ENCODE measurements at regions of chr14 and their contacts with region 1.

Region 1: GRCh38 chr14:100383727-100384158 is 60.6 kb downstream of the SLC25A47 start:
- H3K4me3 ChIP-seq: no peak overlapping the region
- H3K27ac ChIP-seq: no peak overlapping the region
- H3K4me1 ChIP-seq: peaks cover 14% of the 10 kb centered on the region
- CTCF ChIP-seq: peak; percentile 89

Region 2: GRCh38 chr14:100408350-100409015 is 24.7 kb after region 1 on chr14:
- CTCF ChIA-PET with region 1: interaction called, 17 read pairs
- POLR2A ChIA-PET with region 1: interaction called, 5 read pairs
- H3K4me3 ChIP-seq: no peak overlapping the region
- H3K27ac ChIP-seq: no peak overlapping the region
- H3K4me1 ChIP-seq: 0 out of 2 replicates have a peak, but pooled peaks cover 5% of the 10 kb centered on the region
- CTCF ChIP-seq: no peak

Region 3: DNA sequence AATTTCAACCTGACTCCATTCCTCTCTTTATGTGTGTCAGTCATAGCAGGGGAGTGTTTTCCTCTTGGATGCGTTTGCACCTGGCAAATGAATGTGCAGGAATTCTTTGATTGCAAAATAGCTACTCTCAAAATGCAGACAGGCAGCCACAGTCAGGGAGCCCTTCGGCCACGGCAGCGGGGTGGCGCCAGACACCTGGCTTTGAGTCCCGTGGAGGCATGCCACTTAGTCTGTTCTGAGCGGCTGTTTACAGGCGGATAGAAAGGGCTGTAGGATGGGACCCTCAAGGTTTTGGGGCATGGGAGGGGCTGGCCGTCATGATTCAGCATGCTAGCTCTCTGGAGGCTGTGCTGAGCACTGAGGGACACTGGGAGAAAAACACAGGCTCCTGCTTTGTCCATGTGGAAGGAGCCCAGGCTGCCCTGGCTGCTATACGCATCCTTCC is 56.5 kb after region 1 on chr14:
- CTCF ChIA-PET with region 1: interaction called, 43 read pairs
- POLR2A ChIA-PET with region 1: no interaction called
- H3K4me3 ChIP-seq: no peak overlapping the region
- H3K27ac ChIP-seq: no peak overlapping the region
- H3K4me1 ChIP-seq: peaks cover 7% of the 10 kb centered on the region; the same call in 1 of the 2 replicates
- CTCF ChIP-seq: peak; percentile 79

Region 4: DNA sequence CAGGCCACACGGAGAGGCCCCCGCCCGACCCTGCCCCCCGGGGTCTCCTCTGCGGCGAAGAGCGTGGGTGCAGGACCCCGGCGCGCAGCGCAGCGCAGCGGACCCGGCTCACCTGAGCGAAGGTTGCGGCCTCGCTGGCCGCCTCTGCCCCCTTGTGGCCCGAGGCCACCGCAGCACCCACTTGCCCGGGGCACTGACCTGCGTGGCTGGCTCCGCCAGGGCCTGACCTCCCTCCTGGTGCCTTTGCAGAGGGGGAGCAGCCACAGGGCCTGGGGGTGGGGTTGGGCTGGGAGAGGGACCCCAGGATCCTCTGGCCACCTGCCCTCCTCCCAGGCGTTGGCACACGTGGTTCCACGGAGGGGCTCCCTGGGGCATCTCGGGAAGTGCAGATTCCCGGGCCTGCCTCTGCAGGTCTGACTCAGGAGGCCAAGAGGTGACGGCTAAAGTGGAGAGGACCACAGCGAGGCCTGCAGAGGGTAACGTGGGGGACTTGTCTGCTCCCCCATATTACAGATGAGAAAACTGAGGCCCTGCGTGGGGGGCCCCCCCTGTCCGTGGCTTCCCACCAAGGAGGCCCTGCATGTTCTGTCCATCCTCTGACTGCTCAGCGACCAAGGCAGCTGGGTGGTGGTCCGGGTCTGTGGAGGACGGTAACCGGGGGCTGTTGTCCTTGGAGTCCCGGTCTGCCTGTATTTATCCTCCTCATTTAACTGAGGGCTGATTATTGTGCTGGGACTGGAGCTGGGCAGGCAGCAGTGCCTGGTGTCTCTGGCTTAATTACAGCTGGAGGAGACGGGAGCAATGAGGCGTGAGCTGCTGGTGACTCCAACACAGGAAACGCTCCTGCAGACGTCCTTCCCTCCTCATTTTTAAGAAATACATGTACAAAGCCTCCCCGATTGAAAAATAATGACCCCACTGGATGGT is 271.3 kb after region 1 on chr14:
- CTCF ChIA-PET with region 1: interaction called, 52 read pairs
- POLR2A ChIA-PET with region 1: no interaction called
- H3K4me3 ChIP-seq: no peak overlapping the region; the same call in 1 of the 2 replicates
- H3K27ac ChIP-seq: no peak overlapping the region
- H3K4me1 ChIP-seq: no peaks in the 10 kb centered on the region
- CTCF ChIP-seq: no peak

Region 5: GRCh38 chr14:101235335-101236103 is 851.8 kb after region 1 on chr14:
- CTCF ChIA-PET with region 1: interaction called, 11 read pairs
- POLR2A ChIA-PET with region 1: no interaction called
- H3K4me3 ChIP-seq: no peak overlapping the region
- H3K27ac ChIP-seq: no peak overlapping the region
- H3K4me1 ChIP-seq: no peaks in the 10 kb centered on the region
- CTCF ChIP-seq: peak; percentile 71